Dorsolateral prefrontal cortex (tissue), 120 donors: ENCODE measurements at regions of chr6 and their contacts with region 1.

Region 1: GRCh38 chr6:5260661-5261544 is at the starts of genes FARS2 and LYRM4:
- DNase-seq: peak; percentile 74 to 92 (median 88)
- H3K4me3 ChIP-seq: peak within 1 kb of the TSS; percentile 71 to 99 (median 90)
- H3K27ac ChIP-seq: peak within 1 kb of the TSS; percentile 84 to 100 (median 98)
- H3K27me3 ChIP-seq: no peaks in the 10 kb centered on the region
- CTCF ChIP-seq: peak in 38 of 56 donors; percentile 2 to 63 (median 32)
- total RNA-seq, gene FARS2: 16.9 to 38.4 (median 25.4) TPM
- total RNA-seq, gene LYRM4: 23.8 to 53.4 (median 36.9) TPM

Region 2: GRCh38 chr6:5214570-5215052 is 46.3 kb before region 1 on chr6:
- intact Hi-C with region 1: loop called (anchors 5 to 10 kb)
- DNase-seq: peak in 9 of 10 donors; percentile 22 to 83 (median 66)
- H3K4me3 ChIP-seq: no peak overlapping the region
- H3K27ac ChIP-seq: peak overlapping the region in 46 of 59 donors; percentile 6 to 73 (median 50)
- H3K27me3 ChIP-seq: no peaks in the 10 kb centered on the region
- CTCF ChIP-seq: peak; percentile 25 to 87 (median 73)

Region 3: GRCh38 chr6:5314191-5314865 is 53.4 kb after region 1 on chr6:
- intact Hi-C with region 1: no loop called
- DNase-seq: no peak
- H3K4me3 ChIP-seq: no peak overlapping the region
- H3K27ac ChIP-seq: no peak overlapping the region
- H3K27me3 ChIP-seq: no peaks in the 10 kb centered on the region
- CTCF ChIP-seq: no peak

Region 4: DNA sequence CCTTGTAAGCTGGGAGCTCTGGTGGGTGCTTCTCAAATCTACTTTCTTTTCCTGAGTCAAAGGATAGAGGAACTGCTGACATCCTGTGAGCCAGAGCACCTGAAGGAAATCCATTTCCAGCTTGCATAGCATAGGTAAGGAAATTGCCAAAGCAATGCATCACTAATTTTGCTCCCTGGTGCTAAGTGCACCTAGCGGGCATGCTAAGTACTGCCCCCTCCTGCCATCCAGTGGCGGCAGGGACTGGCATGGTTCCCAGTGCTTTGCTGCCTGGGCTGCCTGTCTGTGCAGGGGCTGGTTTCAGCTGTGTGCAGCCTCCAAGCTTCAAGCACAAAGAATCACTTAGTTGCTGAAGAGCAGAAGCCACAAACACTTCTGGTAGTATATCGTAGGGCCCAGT is 64.3 kb after region 1 on chr6:
- intact Hi-C with region 1: loop called in 1 of 2 experiments (anchors 5 kb)
- DNase-seq: peak; percentile 22 to 83 (median 80)
- H3K4me3 ChIP-seq: peak overlapping the region in 4 of 59 donors; percentile 5 to 16 (median 8)
- H3K27ac ChIP-seq: peak overlapping the region in 30 of 59 donors; percentile 1 to 71 (median 33)
- H3K27me3 ChIP-seq: no peaks in the 10 kb centered on the region
- CTCF ChIP-seq: peak in 55 of 56 donors; percentile 17 to 82 (median 63)